CD8-positive, alpha-beta T cell (primary cell): ENCODE measurements at regions of chr1 and their contacts with region 1.

Region 1: GRCh38 chr1:155193275-155193990 is 14.3 kb downstream of the THBS3 start:
- DNase-seq: peak in 8 of 9 experiments; percentile 57 to 84 (median 73)
- ATAC-seq: peak; percentile 14
- H3K4me3 ChIP-seq: peak overlapping the region; percentile 57 to 85
- H3K4me3 Mint-ChIP-seq: peak overlapping the region; percentile 85
- H3K27ac ChIP-seq: peak overlapping the region; percentile 87 to 89
- H3K27ac Mint-ChIP-seq: peak overlapping the region; percentile 98
- H3K4me1 ChIP-seq: peaks cover 24% of the 10 kb centered on the region
- H3K4me1 Mint-ChIP-seq: peaks cover 30% of the 10 kb centered on the region
- H3K27me3 ChIP-seq: no peaks in the 10 kb centered on the region
- H3K27me3 Mint-ChIP-seq: no peaks in the 10 kb centered on the region
- CTCF ChIP-seq: peak; percentile 87

Region 2: GRCh38 chr1:155127105-155127964 is 66.1 kb before region 1 on chr1 and contains the start of gene EFNA1:
- CTCF ChIA-PET with region 1: no interaction called
- POLR2A ChIA-PET with region 1: no interaction called
- intact Hi-C with region 1: loop called in 1 of 2 experiments (anchors 2 kb)
- DNase-seq: peak in 7 of 9 experiments; percentile 36 to 64 (median 48)
- ATAC-seq: peak; percentile 47
- H3K4me3 ChIP-seq: peak within 1 kb of the TSS; percentile 53 to 59
- H3K4me3 Mint-ChIP-seq: peak within 1 kb of the TSS; percentile 86
- H3K27ac ChIP-seq: no peak within 1 kb of the TSS
- H3K27ac Mint-ChIP-seq: peak within 1 kb of the TSS; percentile 87
- H3K4me1 ChIP-seq: peaks cover 36% of the 10 kb centered on the region
- H3K4me1 Mint-ChIP-seq: peaks cover 45% of the 10 kb centered on the region
- H3K27me3 ChIP-seq: peaks cover 0 to 2% of the 10 kb centered on the region in 2 experiments
- H3K27me3 Mint-ChIP-seq: no peaks in the 10 kb centered on the region
- CTCF ChIP-seq: no peak
- total RNA-seq, gene EFNA1: 7.3 to 10.4 TPM

Region 3: DNA sequence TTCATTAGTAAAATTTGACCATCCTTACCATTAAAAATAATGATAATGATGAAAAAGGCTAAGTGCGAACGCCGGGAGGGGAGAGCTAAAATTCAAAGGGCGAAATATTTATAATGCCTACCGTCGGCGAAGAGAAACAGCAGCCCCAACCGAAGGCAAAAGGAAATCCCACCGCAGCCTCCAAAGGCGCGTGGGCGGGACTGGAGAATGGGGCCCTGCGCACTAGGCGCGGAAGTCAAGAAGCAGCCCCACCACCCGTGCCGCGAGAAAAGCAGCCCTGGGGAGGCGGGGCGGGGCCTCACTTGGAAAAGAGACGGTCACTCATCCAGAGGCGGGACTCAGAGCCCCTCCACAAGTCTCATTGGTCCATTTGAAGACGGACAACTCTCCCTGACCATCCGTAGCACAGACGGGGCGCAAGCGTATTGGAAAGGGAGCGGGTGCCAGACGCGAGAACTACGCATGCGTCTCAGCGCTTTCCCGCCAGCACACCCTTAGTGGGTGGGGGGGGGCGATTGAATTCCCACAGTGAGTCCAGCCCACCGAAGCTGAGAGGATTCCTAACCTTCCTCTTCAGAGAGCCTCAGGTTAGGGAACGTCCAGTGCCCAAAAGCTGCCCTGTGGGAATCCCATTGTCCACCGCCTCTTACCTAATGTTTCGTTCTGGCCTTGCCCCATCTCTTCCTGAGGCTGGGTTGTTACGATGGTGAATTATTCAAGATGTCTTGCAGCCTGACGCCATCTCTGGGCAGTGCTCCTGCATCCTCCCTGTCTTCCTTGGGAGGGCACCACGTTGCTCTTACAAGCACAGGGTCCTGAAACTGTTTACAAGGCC is 34.0 kb after region 1 on chr1:
- CTCF ChIA-PET with region 1: interaction called, 11 read pairs
- POLR2A ChIA-PET with region 1: interaction called, 7 read pairs
- intact Hi-C with region 1: loop called (anchors 2 to 5 kb)
- DNase-seq: peak; percentile 95 to 100 (median 98)
- ATAC-seq: peak; percentile 95
- H3K4me3 ChIP-seq: peak overlapping the region; percentile 71 to 74
- H3K4me3 Mint-ChIP-seq: peak overlapping the region; percentile 88
- H3K27ac ChIP-seq: peak overlapping the region; percentile 70 to 86
- H3K27ac Mint-ChIP-seq: peak overlapping the region; percentile 85
- H3K4me1 ChIP-seq: peaks cover 18% of the 10 kb centered on the region
- H3K4me1 Mint-ChIP-seq: peaks cover 24% of the 10 kb centered on the region
- H3K27me3 ChIP-seq: no peaks in the 10 kb centered on the region
- H3K27me3 Mint-ChIP-seq: no peaks in the 10 kb centered on the region
- CTCF ChIP-seq: no peak

Region 4: GRCh38 chr1:155244368-155245162 is 51.1 kb after region 1 on chr1:
- CTCF ChIA-PET with region 1: interaction called, 11 read pairs
- POLR2A ChIA-PET with region 1: interaction called, 3 read pairs
- intact Hi-C with region 1: loop called (anchors 5 kb)
- DNase-seq: peak; percentile 89 to 99 (median 96)
- ATAC-seq: peak; percentile 95
- H3K4me3 ChIP-seq: peak overlapping the region; percentile 59 to 73
- H3K4me3 Mint-ChIP-seq: peak overlapping the region; percentile 88
- H3K27ac ChIP-seq: peak overlapping the region; percentile 71 to 78
- H3K27ac Mint-ChIP-seq: peak overlapping the region; percentile 97
- H3K4me1 ChIP-seq: peaks cover 34% of the 10 kb centered on the region
- H3K4me1 Mint-ChIP-seq: peaks cover 43% of the 10 kb centered on the region
- H3K27me3 ChIP-seq: no peaks in the 10 kb centered on the region
- H3K27me3 Mint-ChIP-seq: peaks cover 2% of the 10 kb centered on the region
- CTCF ChIP-seq: peak; percentile 62

Region 5: GRCh38 chr1:155323798-155324610 is 130.6 kb after region 1 on chr1:
- CTCF ChIA-PET with region 1: interaction called, 3 read pairs
- POLR2A ChIA-PET with region 1: no interaction called
- intact Hi-C with region 1: loop called in 1 of 2 experiments (anchors 5 kb)
- DNase-seq: peak; percentile 66 to 94 (median 85)
- ATAC-seq: peak; percentile 81
- H3K4me3 ChIP-seq: peak overlapping the region; percentile 89 to 100
- H3K4me3 Mint-ChIP-seq: peak overlapping the region; percentile 90
- H3K27ac ChIP-seq: peak overlapping the region; percentile 69 to 90
- H3K27ac Mint-ChIP-seq: peak overlapping the region; percentile 55
- H3K4me1 ChIP-seq: peaks cover 34% of the 10 kb centered on the region
- H3K4me1 Mint-ChIP-seq: peaks cover 33% of the 10 kb centered on the region
- H3K27me3 ChIP-seq: no peaks in the 10 kb centered on the region
- H3K27me3 Mint-ChIP-seq: no peaks in the 10 kb centered on the region
- CTCF ChIP-seq: no peak

Region 6: DNA sequence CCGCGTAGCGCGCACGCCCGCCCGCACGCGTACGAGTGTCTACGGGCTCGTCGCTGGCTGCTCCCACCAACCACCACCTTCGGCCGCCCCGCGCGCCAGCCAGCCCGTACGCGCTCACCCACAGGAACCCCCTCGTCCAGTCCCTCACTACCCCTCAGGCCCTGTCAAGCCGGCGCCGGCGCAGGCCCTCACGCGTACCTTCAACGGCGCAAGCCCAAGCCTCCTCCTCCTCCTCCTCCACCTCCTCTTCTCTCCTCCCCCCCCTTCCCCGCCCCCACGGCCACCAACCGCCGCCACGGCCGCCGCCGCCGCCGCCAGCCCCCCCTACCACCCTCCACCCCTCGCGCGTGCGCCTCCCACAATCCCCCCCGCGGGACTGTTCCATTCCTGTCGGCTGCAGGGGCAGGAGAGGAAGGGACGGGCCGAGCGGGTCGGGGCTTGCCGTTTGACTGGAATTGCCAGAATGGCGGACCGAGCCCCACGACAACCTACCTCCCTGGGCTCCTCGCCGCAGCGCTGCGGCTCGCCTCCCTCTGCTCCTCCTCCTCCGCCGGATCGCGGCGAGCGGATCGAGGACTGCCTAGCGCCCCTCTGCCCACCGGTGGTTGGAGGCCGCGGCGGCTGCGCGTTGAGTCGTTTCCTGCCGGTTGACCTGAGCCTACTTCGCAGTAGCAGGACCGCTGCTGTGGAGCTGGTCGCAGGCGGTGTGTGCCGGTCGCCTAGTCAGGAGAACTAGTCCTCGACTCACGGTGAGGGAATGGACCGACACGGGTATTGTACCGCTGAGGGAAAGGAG is 369.3 kb after region 1 on chr1 and contains the start of gene ASH1L:
- CTCF ChIA-PET with region 1: no interaction called
- POLR2A ChIA-PET with region 1: no interaction called
- intact Hi-C with region 1: loop called in 1 of 2 experiments (anchors 2 kb)
- DNase-seq: peak; percentile 89 to 98 (median 94)
- ATAC-seq: peak; percentile 73
- H3K4me3 ChIP-seq: peak within 1 kb of the TSS; percentile 91 to 100
- H3K4me3 Mint-ChIP-seq: peak within 1 kb of the TSS; percentile 99
- H3K27ac ChIP-seq: peak within 1 kb of the TSS; percentile 97 to 98
- H3K27ac Mint-ChIP-seq: peak within 1 kb of the TSS; percentile 98
- H3K4me1 ChIP-seq: peaks cover 38% of the 10 kb centered on the region
- H3K4me1 Mint-ChIP-seq: peaks cover 53% of the 10 kb centered on the region
- H3K27me3 ChIP-seq: no peaks in the 10 kb centered on the region
- H3K27me3 Mint-ChIP-seq: no peaks in the 10 kb centered on the region
- CTCF ChIP-seq: no peak
- total RNA-seq, gene ASH1L: 54.6 to 58.9 TPM